IMR-90 (cell line): ENCODE measurements at regions of chrX and their contacts with region 1.

Region 1: GRCh38 chrX:129931411-129932015 is 25.5 kb downstream of the UTP14A start:
- DNase-seq: peak; percentile 84
- ATAC-seq: peak; percentile 85
- H3K4me3 ChIP-seq: peak overlapping the region; percentile 72
- H3K27ac ChIP-seq: peak overlapping the region; percentile 91
- H3K4me1 ChIP-seq: no peaks in the 10 kb centered on the region
- H3K27me3 ChIP-seq: peaks cover 25% of the 10 kb centered on the region
- CTCF ChIP-seq: no peak
- POLR2A ChIP-seq: peak; percentile 47
- RAD21 ChIP-seq: no peak

Region 2: GRCh38 chrX:129908636-129909035 is 22.9 kb before region 1 on chrX:
- CTCF ChIA-PET with region 1: no interaction called
- POLR2A ChIA-PET with region 1: no interaction called
- dilution Hi-C with region 1: no loop called
- in situ Hi-C with region 1: no loop called
- intact Hi-C with region 1: no loop called
- DNase-seq: no peak
- ATAC-seq: no peak
- H3K4me3 ChIP-seq: no peak overlapping the region
- H3K27ac ChIP-seq: no peak overlapping the region
- H3K4me1 ChIP-seq: no peaks in the 10 kb centered on the region
- H3K27me3 ChIP-seq: no peaks in the 10 kb centered on the region
- CTCF ChIP-seq: no peak
- POLR2A ChIP-seq: no peak
- RAD21 ChIP-seq: no peak

Region 3: GRCh38 chrX:129982274-129983251 is 51.0 kb after region 1 on chrX and contains the start of gene BCORL1:
- CTCF ChIA-PET with region 1: no interaction called
- POLR2A ChIA-PET with region 1: no interaction called
- dilution Hi-C with region 1: no loop called
- in situ Hi-C with region 1: no loop called
- intact Hi-C with region 1: loop called (anchors 2 kb)
- DNase-seq: peak; percentile 89
- ATAC-seq: peak; percentile 84
- H3K4me3 ChIP-seq: peak within 1 kb of the TSS; percentile 71
- H3K27ac ChIP-seq: no peak within 1 kb of the TSS
- H3K4me1 ChIP-seq: no peaks in the 10 kb centered on the region
- H3K27me3 ChIP-seq: peaks cover 13% of the 10 kb centered on the region
- CTCF ChIP-seq: no peak
- POLR2A ChIP-seq: peak; percentile 78
- RAD21 ChIP-seq: no peak
- total RNA-seq, gene BCORL1: 0.28 and 0.54 TPM in 2 replicates

Region 4: GRCh38 chrX:130055103-130055502 is 123.6 kb after region 1 on chrX:
- CTCF ChIA-PET with region 1: interaction called, 5 read pairs
- POLR2A ChIA-PET with region 1: no interaction called
- dilution Hi-C with region 1: no loop called
- in situ Hi-C with region 1: loop called (anchors 10 kb)
- intact Hi-C with region 1: loop called (anchors 1 kb)
- DNase-seq: peak; percentile 69
- ATAC-seq: peak; percentile 87
- H3K4me3 ChIP-seq: no peak overlapping the region
- H3K27ac ChIP-seq: peak overlapping the region; percentile 45; the same call in 1 of the 2 replicates
- H3K4me1 ChIP-seq: peaks cover 3% of the 10 kb centered on the region; the same call in 1 of the 2 replicates
- H3K27me3 ChIP-seq: no peaks in the 10 kb centered on the region; the same call in 1 of the 2 replicates
- CTCF ChIP-seq: no peak
- POLR2A ChIP-seq: no peak
- RAD21 ChIP-seq: no peak

Region 5: GRCh38 chrX:130060122-130061069 is 128.9 kb after region 1 on chrX:
- CTCF ChIA-PET with region 1: interaction called, 5 read pairs
- POLR2A ChIA-PET with region 1: no interaction called
- dilution Hi-C with region 1: no loop called
- in situ Hi-C with region 1: loop called (anchors 10 kb)
- intact Hi-C with region 1: loop called (anchors 1 kb)
- DNase-seq: peak; percentile 37
- ATAC-seq: peak; percentile 91
- H3K4me3 ChIP-seq: peak overlapping the region; percentile 76
- H3K27ac ChIP-seq: peak overlapping the region; percentile 38; the same call in 1 of the 2 replicates
- H3K4me1 ChIP-seq: peaks cover 1% of the 10 kb centered on the region; the same call in 1 of the 2 replicates
- H3K27me3 ChIP-seq: no peaks in the 10 kb centered on the region; the same call in 1 of the 2 replicates
- CTCF ChIP-seq: peak; percentile 80
- POLR2A ChIP-seq: no peak
- RAD21 ChIP-seq: peak; percentile 75